ENCODE measurements at regions of chr10 and their contacts with region 1.

Region 1: DNA sequence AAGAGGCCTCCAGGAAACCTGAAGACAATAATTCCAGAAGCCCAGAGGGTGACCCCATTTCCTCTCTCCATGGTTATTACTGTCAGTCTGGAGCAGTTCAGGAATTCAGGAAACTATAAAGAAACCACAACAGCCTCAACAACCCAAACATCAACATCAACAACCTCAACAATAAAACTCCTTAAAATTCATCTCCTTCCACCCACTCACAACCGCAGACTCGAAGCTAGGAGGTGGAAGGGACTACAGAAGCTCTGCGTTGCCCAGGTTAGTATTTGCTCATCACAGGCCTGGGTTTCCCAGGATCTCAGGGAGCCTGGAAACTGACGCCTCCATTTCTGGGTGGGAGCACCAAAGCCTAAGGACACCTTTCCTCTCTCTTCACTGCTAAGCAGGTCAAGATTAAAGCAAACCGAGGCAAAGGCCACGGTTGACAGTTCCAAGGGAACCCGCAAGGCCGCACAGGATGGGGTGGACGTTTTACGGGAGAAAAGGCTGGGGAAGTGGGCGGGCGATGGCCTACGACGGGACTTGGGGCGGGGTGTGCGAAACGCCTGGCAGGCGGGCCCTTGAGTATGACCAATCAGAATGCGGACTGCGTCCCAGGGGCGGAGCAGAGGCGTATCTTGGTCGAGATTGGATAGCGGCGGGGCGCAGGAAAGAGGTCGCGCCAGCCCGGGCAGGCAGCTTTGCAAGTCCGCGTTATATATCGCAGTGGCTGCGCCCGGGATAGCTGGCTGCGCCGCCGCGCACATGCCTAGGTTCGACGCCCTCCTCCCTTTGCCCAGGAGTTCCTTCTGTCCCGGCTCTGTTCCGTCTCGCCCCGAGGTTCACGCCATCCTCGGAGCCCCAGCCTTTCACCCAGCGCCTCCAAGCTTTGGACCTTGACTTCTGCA is at the start of gene ELOVL3:
- DNase-seq: peak; percentile 94
- ATAC-seq: peak; percentile 96
- H3K4me3 Mint-ChIP-seq: peak within 1 kb of the TSS; percentile 59
- H3K27ac Mint-ChIP-seq: no peak within 1 kb of the TSS
- H3K4me1 Mint-ChIP-seq: peaks cover 19% of the 10 kb centered on the region
- H3K27me3 Mint-ChIP-seq: peaks cover 73% of the 10 kb centered on the region
- total RNA-seq, gene ELOVL3: not detected

Region 2: GRCh38 chr10:102175415-102175814 is 50.5 kb before region 1 on chr10:
- CTCF ChIA-PET with region 1: interaction called, 169 read pairs
- DNase-seq: no peak
- ATAC-seq: no peak
- H3K4me3 Mint-ChIP-seq: no peak overlapping the region
- H3K27ac Mint-ChIP-seq: no peak overlapping the region
- H3K4me1 Mint-ChIP-seq: peaks cover 2% of the 10 kb centered on the region
- H3K27me3 Mint-ChIP-seq: peaks cover 12% of the 10 kb centered on the region

Region 3: DNA sequence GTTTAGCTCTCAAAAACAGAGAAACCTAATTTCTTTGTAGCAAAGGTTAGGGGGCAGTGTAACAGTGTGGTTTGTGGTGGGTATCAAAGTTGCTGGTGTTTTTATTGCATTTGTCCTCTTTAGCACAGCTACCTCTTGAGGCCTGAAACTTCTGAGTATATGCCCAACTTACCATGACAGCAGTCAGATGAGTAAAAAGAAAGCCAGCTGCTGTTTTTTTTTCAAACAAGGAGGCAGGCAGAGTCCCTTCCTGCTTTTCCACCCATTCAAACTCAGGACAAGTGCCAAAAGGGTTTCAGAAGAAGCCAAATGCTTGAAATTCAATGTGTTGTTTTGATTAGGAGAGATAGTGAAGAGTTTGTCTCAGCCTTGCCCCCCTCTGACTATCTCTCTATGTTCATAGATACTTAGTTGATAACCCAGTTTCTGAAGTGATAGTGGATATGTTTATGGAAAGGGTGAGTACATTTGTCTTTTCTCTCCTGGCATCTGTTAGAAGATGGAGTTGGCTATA is 42.5 kb after region 1 on chr10:
- CTCF ChIA-PET with region 1: interaction called, 13 read pairs
- DNase-seq: no peak
- ATAC-seq: peak; percentile 39
- H3K4me3 Mint-ChIP-seq: no peak overlapping the region
- H3K27ac Mint-ChIP-seq: peak overlapping the region; percentile 47
- H3K4me1 Mint-ChIP-seq: peaks cover 40% of the 10 kb centered on the region
- H3K27me3 Mint-ChIP-seq: no peaks in the 10 kb centered on the region

Region 4: GRCh38 chr10:102342958-102343357 is 117.1 kb after region 1 on chr10:
- CTCF ChIA-PET with region 1: interaction called, 824 read pairs
- DNase-seq: no peak
- ATAC-seq: no peak
- H3K4me3 Mint-ChIP-seq: no peak overlapping the region
- H3K27ac Mint-ChIP-seq: no peak overlapping the region
- H3K4me1 Mint-ChIP-seq: peaks cover 3% of the 10 kb centered on the region
- H3K27me3 Mint-ChIP-seq: no peaks in the 10 kb centered on the region

Region 5: GRCh38 chr10:102394079-102394800 is 168.3 kb after region 1 on chr10:
- CTCF ChIA-PET with region 1: interaction called, 271 read pairs
- DNase-seq: peak; percentile 99
- ATAC-seq: peak; percentile 88
- H3K4me3 Mint-ChIP-seq: peak overlapping the region; percentile 84
- H3K27ac Mint-ChIP-seq: peak overlapping the region; percentile 90
- H3K4me1 Mint-ChIP-seq: peaks cover 38% of the 10 kb centered on the region
- H3K27me3 Mint-ChIP-seq: no peaks in the 10 kb centered on the region

Region 6: DNA sequence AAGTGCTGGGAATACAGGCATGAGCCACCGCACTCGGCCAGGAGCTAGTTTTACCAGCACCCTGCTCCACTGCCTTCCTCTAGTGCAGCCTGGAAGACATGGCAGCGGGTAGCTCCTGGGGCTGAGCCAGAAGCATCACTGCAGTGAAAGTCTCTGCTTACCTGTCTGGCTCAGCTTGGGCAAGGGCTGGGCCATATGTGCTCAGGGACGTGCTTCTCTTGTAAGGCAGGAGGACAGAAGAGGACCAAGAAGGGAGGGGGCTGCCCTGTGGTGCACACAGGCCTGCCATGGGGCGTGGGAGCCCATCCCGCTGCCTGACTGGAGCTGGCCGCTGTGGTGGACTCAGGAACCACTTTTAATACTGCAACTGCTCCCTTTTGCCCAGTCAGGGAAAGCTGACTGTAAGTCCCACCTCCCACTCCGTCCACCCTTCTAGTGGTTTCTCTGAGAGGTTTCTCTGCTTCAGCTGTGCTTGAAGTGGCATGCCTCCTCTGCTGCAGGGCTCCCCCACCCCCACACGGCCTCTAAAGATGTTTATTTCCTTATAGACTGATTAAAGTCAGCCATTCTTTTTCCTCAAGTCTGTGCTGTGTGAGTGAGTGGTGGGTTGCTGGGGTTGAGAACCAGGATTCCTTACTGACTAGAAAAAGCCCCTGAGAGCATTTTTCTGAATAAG is 250.7 kb after region 1 on chr10:
- CTCF ChIA-PET with region 1: interaction called, 35 read pairs
- DNase-seq: no peak
- ATAC-seq: no peak
- H3K4me3 Mint-ChIP-seq: no peak overlapping the region
- H3K27ac Mint-ChIP-seq: peak overlapping the region; percentile 52
- H3K4me1 Mint-ChIP-seq: peaks cover 12% of the 10 kb centered on the region
- H3K27me3 Mint-ChIP-seq: no peaks in the 10 kb centered on the region